ENCODE measurements at regions of chr22 and their contacts with region 1.

Region 1: GRCh38 chr22:29635734-29636357 is 32.4 kb downstream of the NF2 start:
- H3K4me3 ChIP-seq: no peak overlapping the region
- H3K27ac ChIP-seq: no peak overlapping the region
- H3K4me1 ChIP-seq: no peaks in the 10 kb centered on the region; the same call in 1 of the 2 replicates
- CTCF ChIP-seq: peak; percentile 70; the same call in 1 of the 2 replicates

Region 2: GRCh38 chr22:29654356-29654755 is 18.5 kb after region 1 on chr22:
- CTCF ChIA-PET with region 1: interaction called, 18 read pairs
- POLR2A ChIA-PET with region 1: no interaction called
- H3K4me3 ChIP-seq: no peak overlapping the region
- H3K27ac ChIP-seq: no peak overlapping the region
- H3K4me1 ChIP-seq: no peaks in the 10 kb centered on the region
- CTCF ChIP-seq: no peak

Region 3: DNA sequence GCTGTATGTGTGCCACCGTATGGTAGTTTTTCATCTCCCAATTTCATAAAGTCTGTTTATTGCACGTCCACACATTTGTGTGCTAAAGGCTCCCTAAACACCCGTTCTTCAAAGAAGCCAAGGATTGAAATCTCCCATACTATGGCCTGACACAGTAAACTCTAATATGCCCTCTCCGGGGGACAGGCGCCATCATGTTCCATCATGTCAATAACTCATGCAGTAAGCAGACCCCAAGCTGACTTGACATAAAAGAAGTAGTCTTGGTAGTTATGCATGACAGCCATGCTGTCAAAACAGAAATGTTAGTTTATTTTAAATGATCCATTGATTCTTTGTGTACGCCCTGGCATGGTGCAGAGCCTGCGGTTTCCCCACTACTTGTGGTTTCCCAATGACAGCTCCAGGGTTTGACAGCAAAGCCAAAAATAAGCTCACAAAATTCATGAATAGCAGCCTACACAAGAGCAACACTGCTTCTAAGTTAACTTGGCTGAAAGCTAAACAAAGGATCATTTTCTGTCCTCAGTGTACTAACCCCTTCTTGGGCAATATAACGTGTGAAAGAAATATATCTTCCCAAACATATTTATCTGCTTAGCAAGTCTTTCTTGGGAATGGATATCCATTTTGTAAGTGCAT is 27.5 kb after region 1 on chr22:
- CTCF ChIA-PET with region 1: interaction called, 10 read pairs
- POLR2A ChIA-PET with region 1: no interaction called
- H3K4me3 ChIP-seq: no peak overlapping the region
- H3K27ac ChIP-seq: no peak overlapping the region
- H3K4me1 ChIP-seq: no peaks in the 10 kb centered on the region
- CTCF ChIP-seq: no peak